AG04449 (cell line): ENCODE measurements at regions of chr5 and their contacts with region 1.

Region 1: DNA sequence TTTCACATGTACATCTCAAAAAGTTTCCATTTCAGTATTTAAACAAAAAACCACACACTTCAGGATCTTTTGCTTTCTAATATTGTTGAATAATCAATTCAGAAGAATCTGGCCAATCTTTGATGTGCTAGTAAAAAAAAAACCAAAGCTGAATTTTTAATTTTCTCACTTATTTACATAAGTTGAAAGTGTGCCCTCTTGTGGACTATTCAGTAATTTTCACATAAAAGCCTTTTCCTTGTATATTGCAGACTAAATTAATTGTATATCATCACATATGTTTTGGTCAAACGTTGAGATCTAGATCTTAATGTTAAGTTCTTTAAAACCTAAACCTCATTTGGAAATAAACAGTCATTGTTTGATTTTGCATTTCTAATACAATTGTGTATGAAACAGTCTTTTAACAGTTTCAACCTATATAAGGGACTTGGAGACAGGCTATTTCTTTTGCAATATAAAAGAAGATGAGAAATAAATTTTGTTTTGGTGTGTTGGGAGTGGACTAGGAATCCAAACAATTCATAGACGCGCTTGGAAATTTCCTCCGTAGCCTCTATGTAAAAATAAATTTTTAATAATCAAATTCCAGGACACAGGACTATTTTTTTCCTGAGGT is 68.1 kb downstream of the NIPBL start:
- DNase-seq: no peak
- H3K4me3 ChIP-seq: no peak overlapping the region
- CTCF ChIP-seq: peak; percentile 12

Region 2: DNA sequence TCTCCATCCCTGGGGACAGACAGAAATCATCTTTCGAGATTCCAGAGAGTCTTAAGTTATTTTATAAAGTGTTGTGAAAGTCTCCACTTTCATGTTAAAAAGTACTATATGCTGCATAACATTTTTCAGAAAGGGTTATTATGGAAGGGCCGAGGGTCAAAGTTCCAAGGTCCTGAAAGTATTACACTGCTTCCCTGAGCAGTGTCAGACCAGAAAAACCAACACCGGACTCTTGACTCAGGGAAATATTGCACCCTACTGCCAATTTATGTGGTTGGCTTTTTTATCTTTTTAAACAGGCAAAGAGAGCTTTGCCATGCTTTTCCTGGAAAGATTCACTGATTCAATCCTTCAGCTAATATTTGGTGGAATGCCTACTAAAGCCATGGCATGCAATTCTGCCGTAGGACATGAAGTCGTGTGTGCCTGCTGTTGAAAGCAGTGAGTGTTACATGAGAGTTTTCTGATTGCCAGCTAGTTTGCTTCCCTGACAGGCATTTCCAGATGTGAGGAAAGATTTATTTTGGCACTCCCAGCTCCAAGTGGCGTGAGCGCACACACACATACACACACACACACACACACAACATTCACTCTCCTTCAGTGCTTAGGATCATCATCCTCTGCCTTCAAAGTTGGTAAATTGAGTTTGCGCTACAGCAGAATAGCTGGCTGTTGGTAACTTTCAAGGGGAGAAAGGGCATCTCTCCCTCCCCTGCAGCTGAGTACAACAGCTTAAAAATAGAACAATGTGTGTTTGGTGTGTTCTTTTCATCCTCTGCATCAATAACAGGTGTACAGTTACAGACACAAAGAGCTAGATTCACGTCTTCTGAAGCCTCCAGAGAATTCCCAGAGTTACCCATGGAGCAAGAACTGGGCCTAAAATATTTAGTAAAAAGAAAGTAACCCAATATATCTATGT is 292.7 kb before region 1 on chr5:
- CTCF ChIA-PET with region 1: no interaction called
- POLR2A ChIA-PET with region 1: no interaction called
- DNase-seq: no peak
- H3K4me3 ChIP-seq: no peak overlapping the region
- CTCF ChIP-seq: no peak

Region 3: GRCh38 chr5:36744773-36745589 is 199.7 kb before region 1 on chr5:
- CTCF ChIA-PET with region 1: interaction called, 10 read pairs
- POLR2A ChIA-PET with region 1: no interaction called
- DNase-seq: no peak
- H3K4me3 ChIP-seq: peak overlapping the region; percentile 61
- CTCF ChIP-seq: no peak

Region 4: DNA sequence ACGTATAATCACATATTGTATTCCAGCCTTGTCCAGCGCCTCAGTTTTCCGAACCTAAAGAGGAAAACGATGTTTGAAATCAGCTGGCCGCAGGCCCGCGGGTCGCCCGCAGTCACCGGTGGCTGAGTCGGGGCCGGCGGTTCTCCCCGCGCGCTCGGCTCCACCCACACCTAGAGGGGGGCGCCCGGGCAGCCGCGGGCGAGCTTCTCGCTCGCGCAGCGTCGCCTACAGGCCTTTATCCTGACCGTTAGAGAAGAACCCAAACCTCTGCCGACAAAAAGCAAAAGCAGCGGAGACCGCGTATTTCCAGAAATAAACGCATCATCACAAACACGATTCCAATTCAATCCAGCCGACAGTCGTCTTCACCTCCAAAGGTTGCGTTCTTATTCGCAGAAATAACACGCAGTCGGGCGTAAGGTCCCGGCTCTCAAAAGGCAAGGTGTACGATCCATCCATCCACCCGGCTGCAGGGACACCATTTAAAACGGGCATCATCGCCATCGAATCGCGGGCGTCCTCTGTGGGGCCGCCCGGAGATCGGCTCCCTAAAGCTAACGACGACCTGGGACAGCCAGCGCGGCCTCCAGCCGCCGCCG is 68.8 kb before region 1 on chr5:
- CTCF ChIA-PET with region 1: interaction called, 46 read pairs
- POLR2A ChIA-PET with region 1: interaction called, 3 read pairs
- DNase-seq: no peak
- H3K4me3 ChIP-seq: peak overlapping the region; percentile 75
- CTCF ChIP-seq: peak; percentile 64

Region 5: GRCh38 chr5:36957953-36958559 is 13.3 kb after region 1 on chr5:
- CTCF ChIA-PET with region 1: no interaction called
- POLR2A ChIA-PET with region 1: no interaction called
- DNase-seq: no peak
- H3K4me3 ChIP-seq: no peak overlapping the region
- CTCF ChIP-seq: no peak

Region 6: GRCh38 chr5:37054391-37054790 is 109.7 kb after region 1 on chr5:
- CTCF ChIA-PET with region 1: no interaction called
- POLR2A ChIA-PET with region 1: no interaction called
- DNase-seq: no peak
- H3K4me3 ChIP-seq: no peak overlapping the region
- CTCF ChIP-seq: no peak